ENCODE measurements at regions of chr16 and their contacts with region 1.

Region 1: GRCh38 chr16:1543085-1543896 is 9.8 kb downstream of the TMEM204 start:
- DNase-seq: peak in 5 of 9 donors; percentile 23 to 59 (median 38)
- ATAC-seq: peak; percentile 81
- H3K4me3 ChIP-seq: no peak overlapping the region
- H3K4me3 Mint-ChIP-seq: peak overlapping the region; percentile 70 to 86 (median 76)
- H3K27ac ChIP-seq: peak overlapping the region; percentile 51
- H3K27ac Mint-ChIP-seq: peak overlapping the region; percentile 71 to 95 (median 86)
- H3K4me1 ChIP-seq: peaks cover 13 to 70% of the 10 kb centered on the region in 2 donors
- H3K4me1 Mint-ChIP-seq: peaks cover 51 to 89% (median 66%) of the 10 kb centered on the region in 7 donors
- H3K27me3 ChIP-seq: no peaks in the 10 kb centered on the region
- H3K27me3 Mint-ChIP-seq: no peaks in the 10 kb centered on the region

Region 2: GRCh38 chr16:1458336-1458976 is 84.8 kb before region 1 on chr16:
- CTCF ChIA-PET with region 1: no interaction called
- POLR2A ChIA-PET with region 1: no interaction called
- intact Hi-C with region 1: no loop called
- DNase-seq: peak in 1 of 9 donors; percentile 32
- ATAC-seq: peak; percentile 40
- H3K4me3 ChIP-seq: no peak overlapping the region
- H3K4me3 Mint-ChIP-seq: no peak overlapping the region
- H3K27ac ChIP-seq: no peak overlapping the region
- H3K27ac Mint-ChIP-seq: peak overlapping the region in 1 of 9 donors; percentile 32
- H3K4me1 ChIP-seq: no peaks in the 10 kb centered on the region
- H3K4me1 Mint-ChIP-seq: peaks cover 0 to 6% (median 0%) of the 10 kb centered on the region in 7 donors
- H3K27me3 ChIP-seq: no peaks in the 10 kb centered on the region
- H3K27me3 Mint-ChIP-seq: no peaks in the 10 kb centered on the region

Region 3: DNA sequence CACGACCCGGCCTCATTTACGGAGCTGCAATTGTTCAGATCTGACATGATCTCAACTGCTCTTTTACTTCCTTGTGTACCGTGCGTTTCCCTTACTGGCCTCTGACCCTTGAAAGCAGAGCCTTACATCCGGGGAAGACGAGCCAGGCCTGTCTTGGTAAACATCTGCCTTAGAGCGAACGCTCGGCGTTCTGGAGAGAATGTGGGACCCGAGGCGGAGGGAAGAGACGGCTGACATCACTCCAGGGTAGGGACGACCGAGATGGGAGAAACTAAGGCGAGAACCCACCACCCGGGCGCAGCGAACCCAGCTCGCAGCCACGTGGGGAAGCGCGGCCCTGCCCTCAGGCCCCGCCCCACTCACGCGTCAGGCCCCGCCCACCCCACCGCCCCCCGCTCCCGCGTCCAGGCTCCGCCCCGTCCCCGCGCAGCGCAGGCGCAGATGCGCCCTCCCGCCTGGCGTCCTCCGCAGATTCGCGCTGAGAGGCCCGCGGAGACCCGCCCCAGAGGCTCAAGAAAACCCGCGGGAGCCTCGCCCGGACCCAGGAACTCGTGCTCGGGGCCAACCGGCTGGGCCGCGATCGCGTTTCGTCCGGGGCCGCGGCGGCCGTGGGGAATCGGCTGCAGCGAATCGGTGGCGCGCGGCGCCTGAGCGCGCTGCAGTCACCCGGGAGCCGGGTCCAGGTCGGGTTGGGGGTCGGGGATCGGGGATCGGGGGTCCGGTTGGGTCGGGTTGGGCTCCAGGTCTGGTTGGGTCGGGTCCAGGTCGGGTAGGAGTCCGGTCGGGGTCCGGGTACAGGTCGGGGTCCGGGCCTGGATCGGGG is 50.2 kb before region 1 on chr16 and contains the start of gene TELO2:
- CTCF ChIA-PET with region 1: no interaction called
- POLR2A ChIA-PET with region 1: interaction called, 13 read pairs
- intact Hi-C with region 1: loop called in 1 of 2 experiments (anchors 1 kb)
- DNase-seq: peak; percentile 82 to 96 (median 90)
- ATAC-seq: peak; percentile 96
- H3K4me3 ChIP-seq: peak within 1 kb of the TSS; percentile 59
- H3K4me3 Mint-ChIP-seq: peak within 1 kb of the TSS; percentile 83 to 99 (median 94)
- H3K27ac ChIP-seq: peak within 1 kb of the TSS; percentile 88
- H3K27ac Mint-ChIP-seq: peak within 1 kb of the TSS; percentile 97 to 100 (median 99)
- H3K4me1 ChIP-seq: peaks cover 12 to 17% of the 10 kb centered on the region in 2 donors
- H3K4me1 Mint-ChIP-seq: peaks cover 9 to 20% (median 12%) of the 10 kb centered on the region in 7 donors
- H3K27me3 ChIP-seq: no peaks in the 10 kb centered on the region
- H3K27me3 Mint-ChIP-seq: no peaks in the 10 kb centered on the region
- total RNA-seq, gene TELO2: 46.9 to 58.9 (median 50.3) TPM

Measured in naive thymus-derived CD4-positive, alpha-beta T cell (primary cell).